GM12878 (cell line): ENCODE measurements at regions of chr2 and their contacts with region 1.

Region 1: DNA sequence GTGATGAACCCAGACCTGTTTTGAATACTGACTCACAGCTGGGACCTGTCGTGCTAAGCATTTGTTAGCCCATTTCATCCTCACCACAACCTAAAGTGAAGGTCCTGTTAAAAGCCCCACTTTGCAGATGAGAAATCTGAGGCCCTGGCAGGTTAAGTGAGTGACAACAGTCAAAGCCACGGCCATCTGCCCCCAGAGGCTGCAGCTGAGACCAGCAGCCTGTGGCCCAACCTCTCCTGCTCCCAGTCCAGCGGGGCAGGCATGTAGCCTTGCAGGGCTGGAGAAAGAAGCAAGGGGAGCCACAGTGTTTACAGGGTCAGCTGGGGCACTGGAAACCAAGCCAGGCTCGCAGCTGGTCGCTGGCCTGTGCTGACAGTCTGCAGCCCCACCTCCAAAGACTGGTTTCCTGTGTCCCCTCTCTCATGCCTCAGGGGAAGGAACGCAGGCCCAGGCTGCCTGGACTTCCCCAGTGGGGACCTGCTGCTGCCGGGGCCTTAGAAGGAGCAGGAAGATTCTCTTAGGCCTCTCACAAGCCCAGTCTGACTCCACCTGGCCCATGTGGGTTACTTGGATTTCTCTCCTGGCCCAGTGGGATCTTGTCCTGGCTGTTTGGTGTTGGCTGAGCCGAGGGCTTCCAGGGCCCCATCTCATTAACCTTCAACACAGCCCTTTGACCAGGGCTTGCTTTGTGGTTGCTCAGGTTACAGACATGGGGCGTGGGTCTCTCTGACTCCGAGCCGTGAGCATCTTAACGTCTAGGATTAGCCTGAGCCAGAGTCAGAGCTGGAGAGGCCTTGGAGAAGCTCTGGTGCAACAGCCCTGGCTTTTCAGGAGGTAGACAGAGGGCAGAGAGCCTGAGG is 1.7 kb downstream of the INPP5D start:
- DNase-seq: no peak
- ATAC-seq: peak; percentile 63
- H3K4me3 ChIP-seq: peak overlapping the region; percentile 94
- H3K27ac ChIP-seq: peak overlapping the region; percentile 93
- H3K4me1 ChIP-seq: peaks cover 42% of the 10 kb centered on the region
- H3K27me3 ChIP-seq: no peaks in the 10 kb centered on the region
- CTCF ChIP-seq: peak; percentile 44 to 69 (median 53)
- EP300 ChIP-seq: no peak
- POLR2A ChIP-seq: peak; percentile 47
- RAD21 ChIP-seq: 0 out of 2 replicates have a peak, but pooled peaks have one; percentile 18

Region 2: GRCh38 chr2:233084488-233084887 is 22.7 kb after region 1 on chr2:
- CTCF ChIA-PET with region 1: interaction called, 68 read pairs
- POLR2A ChIA-PET with region 1: interaction called, 271 read pairs
- RAD21 ChIA-PET with region 1: interaction called, 361 read pairs
- SMC1A ChIA-PET with region 1: interaction called, 351 read pairs
- in situ Hi-C with region 1: no loop called
- intact Hi-C with region 1: loop called (anchors 1 kb)
- DNase-seq: peak; percentile 78
- ATAC-seq: peak; percentile 28
- H3K4me3 ChIP-seq: peak overlapping the region; percentile 47
- H3K27ac ChIP-seq: peak overlapping the region; percentile 100
- H3K4me1 ChIP-seq: peaks cover 91% of the 10 kb centered on the region
- H3K27me3 ChIP-seq: no peaks in the 10 kb centered on the region
- CTCF ChIP-seq: no peak
- EP300 ChIP-seq: peak; percentile 57 to 62; a peak in 2 of 4 replicates
- POLR2A ChIP-seq: peak; percentile 51; the same call in 1 of the 2 replicates
- RAD21 ChIP-seq: no peak

Region 3: GRCh38 chr2:233100192-233100998 is 38.6 kb after region 1 on chr2:
- CTCF ChIA-PET with region 1: interaction called, 34 read pairs
- POLR2A ChIA-PET with region 1: interaction called, 70 read pairs
- RAD21 ChIA-PET with region 1: interaction called, 160 read pairs
- SMC1A ChIA-PET with region 1: interaction called, 65 read pairs
- in situ Hi-C with region 1: no loop called
- intact Hi-C with region 1: loop called (anchors 1 kb)
- DNase-seq: peak; percentile 95
- ATAC-seq: peak; percentile 90
- H3K4me3 ChIP-seq: peak overlapping the region; percentile 35; the same call in 1 of the 2 replicates
- H3K27ac ChIP-seq: peak overlapping the region; percentile 99
- H3K4me1 ChIP-seq: peaks cover 49% of the 10 kb centered on the region
- H3K27me3 ChIP-seq: no peaks in the 10 kb centered on the region
- CTCF ChIP-seq: no peak
- EP300 ChIP-seq: peak; percentile 78 to 92; a peak in 3 of 4 replicates
- POLR2A ChIP-seq: no peak; the same call in 1 of the 2 replicates
- RAD21 ChIP-seq: peak; percentile 3; the same call in 1 of the 2 replicates

Region 4: DNA sequence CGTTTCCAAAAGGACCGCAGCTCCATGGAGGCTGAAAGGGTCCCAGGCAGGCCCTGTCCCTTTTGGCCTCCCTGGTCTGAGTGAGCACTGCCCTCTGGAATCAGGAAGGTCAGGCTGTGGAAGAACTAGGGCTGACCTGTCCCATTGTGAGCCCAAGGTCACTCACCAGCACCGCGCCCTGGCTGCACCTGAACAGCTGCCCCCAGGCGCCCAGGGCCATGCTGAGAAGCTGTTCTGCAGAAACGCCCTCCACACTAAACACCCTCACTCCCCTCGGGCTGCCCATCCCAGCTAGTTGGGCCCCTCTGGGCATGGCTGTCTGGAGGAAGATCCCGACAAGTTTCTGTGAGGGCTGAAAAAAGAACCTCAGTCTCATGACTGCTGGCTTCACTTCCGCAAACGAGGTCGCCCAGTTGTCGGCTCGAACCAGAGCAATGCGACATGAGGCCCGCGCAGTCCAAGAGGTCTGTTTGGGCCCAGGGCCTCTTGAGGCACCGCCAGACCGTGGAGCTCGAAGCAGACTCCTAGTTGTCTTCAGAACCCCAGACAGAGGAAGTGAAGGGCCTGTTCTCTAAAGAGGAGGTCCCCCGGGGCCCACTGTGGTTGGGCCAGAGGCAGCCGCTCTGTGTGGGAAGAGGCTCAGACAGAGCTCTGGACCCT is 62.7 kb after region 1 on chr2:
- CTCF ChIA-PET with region 1: interaction called, 7 read pairs
- POLR2A ChIA-PET with region 1: interaction called, 8 read pairs
- RAD21 ChIA-PET with region 1: interaction called, 19 read pairs
- SMC1A ChIA-PET with region 1: interaction called, 6 read pairs
- in situ Hi-C with region 1: no loop called
- intact Hi-C with region 1: loop called (anchors 1 kb)
- DNase-seq: peak; percentile 46
- ATAC-seq: peak; percentile 94
- H3K4me3 ChIP-seq: peak overlapping the region; percentile 15; the same call in 1 of the 2 replicates
- H3K27ac ChIP-seq: peak overlapping the region; percentile 93
- H3K4me1 ChIP-seq: peaks cover 27% of the 10 kb centered on the region
- H3K27me3 ChIP-seq: no peaks in the 10 kb centered on the region
- CTCF ChIP-seq: no peak
- EP300 ChIP-seq: 0 out of 4 replicates have a peak, but pooled peaks of 1 of the 2 experiments have one; percentile 51
- POLR2A ChIP-seq: peak; percentile 60; the same call in 1 of the 2 replicates
- RAD21 ChIP-seq: no peak

Region 5: DNA sequence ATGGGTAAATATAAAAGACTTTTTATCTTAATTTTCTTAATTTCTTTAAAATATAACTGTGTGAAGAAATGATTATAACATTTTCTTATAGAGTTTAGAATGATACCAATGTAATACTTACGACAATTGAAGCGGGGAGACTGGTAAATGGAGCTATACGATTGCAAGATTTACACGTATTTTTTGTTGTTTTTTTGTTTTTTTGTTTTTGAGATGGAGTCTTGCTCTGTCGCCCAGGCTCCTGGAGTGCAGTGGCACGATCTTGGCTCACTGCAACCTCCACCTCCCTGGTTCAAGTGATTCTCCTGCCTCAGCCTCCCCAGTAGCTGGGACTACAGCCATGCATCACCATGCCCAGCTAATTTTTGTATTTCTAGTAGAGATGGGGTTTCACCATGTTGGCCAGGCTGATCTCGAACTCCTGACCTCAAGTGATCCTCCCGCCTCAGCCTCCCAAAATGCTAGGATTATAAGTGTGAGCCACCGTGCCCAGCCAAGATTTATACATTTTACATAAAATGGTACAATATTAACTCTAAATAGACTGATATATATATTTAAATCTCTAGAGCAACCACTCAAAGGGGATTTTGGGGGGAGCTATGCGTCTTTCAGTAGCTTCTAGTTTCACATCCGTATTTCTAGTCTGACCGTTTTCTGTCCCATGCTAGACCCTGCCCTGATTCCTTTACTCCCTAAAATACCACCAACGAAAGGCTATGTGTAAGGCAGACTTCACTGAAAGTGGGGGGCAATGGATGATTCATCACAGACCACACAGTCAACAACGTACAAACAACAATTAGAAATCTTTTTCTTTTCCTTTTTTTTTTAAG is 161.5 kb after region 1 on chr2:
- CTCF ChIA-PET with region 1: interaction called, 5 read pairs
- POLR2A ChIA-PET with region 1: interaction called, 5 read pairs
- RAD21 ChIA-PET with region 1: interaction called, 26 read pairs
- SMC1A ChIA-PET with region 1: interaction called, 13 read pairs
- in situ Hi-C with region 1: no loop called
- intact Hi-C with region 1: no loop called
- DNase-seq: peak; percentile 75
- ATAC-seq: peak; percentile 95
- H3K4me3 ChIP-seq: no peak overlapping the region
- H3K27ac ChIP-seq: peak overlapping the region; percentile 66
- H3K4me1 ChIP-seq: peaks cover 28% of the 10 kb centered on the region
- H3K27me3 ChIP-seq: no peaks in the 10 kb centered on the region
- CTCF ChIP-seq: no peak
- EP300 ChIP-seq: peak; percentile 62 to 87; a peak in 3 of 4 replicates
- POLR2A ChIP-seq: no peak
- RAD21 ChIP-seq: no peak

Region 6: GRCh38 chr2:233854241-233854981 is 792.6 kb after region 1 on chr2 and contains the start of gene HJURP:
- CTCF ChIA-PET with region 1: no interaction called
- POLR2A ChIA-PET with region 1: no interaction called
- RAD21 ChIA-PET with region 1: no interaction called
- SMC1A ChIA-PET with region 1: no interaction called
- in situ Hi-C with region 1: no loop called
- intact Hi-C with region 1: loop called (anchors 5 kb)
- DNase-seq: peak; percentile 90
- ATAC-seq: peak; percentile 98
- H3K4me3 ChIP-seq: peak within 1 kb of the TSS; percentile 88
- H3K27ac ChIP-seq: peak within 1 kb of the TSS; percentile 92
- H3K4me1 ChIP-seq: peaks cover 7% of the 10 kb centered on the region; the same call in 1 of the 2 replicates
- H3K27me3 ChIP-seq: no peaks in the 10 kb centered on the region
- CTCF ChIP-seq: no peak
- EP300 ChIP-seq: no peak
- POLR2A ChIP-seq: peak; percentile 96
- RAD21 ChIP-seq: no peak
- polyA plus RNA-seq, gene HJURP: 12.7 to 12.9 TPM